Right ventricle myocardium superior (tissue), 1 donor: ENCODE measurements at regions of chr4 and their contacts with region 1.

Region 1: GRCh38 chr4:150867148-150867547 is 147.9 kb downstream of the LRBA start:
- DNase-seq: no peak
- ATAC-seq: peak; percentile 88

Region 2: GRCh38 chr4:150297861-150298474 is 569.2 kb before region 1 on chr4:
- intact Hi-C with region 1: loop called (anchors 5 kb)
- DNase-seq: no peak
- ATAC-seq: peak; percentile 46